Motor neuron (in vitro differentiated cells): ENCODE measurements at regions of chr14 and their contacts with region 1.

Region 1: DNA sequence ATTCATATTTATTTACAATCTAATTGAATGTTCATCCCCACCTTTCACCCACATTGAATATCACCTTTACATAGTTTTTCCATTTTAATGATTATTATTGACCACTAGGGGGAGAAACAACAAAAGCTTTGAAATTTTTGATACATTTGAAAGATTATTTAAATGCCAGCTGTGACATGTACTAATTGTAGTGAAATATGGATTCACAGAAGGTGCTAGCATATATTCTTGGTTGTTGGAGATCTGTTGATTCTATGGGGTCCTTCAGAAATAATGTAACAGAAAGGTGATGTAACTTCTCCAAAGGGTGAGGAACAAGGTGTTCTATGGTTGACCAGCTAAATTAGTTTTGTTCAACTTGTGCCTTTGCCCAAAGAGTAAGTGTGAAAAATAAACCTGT is 22.4 kb upstream of the GPR33 start:
- ATAC-seq: no peak
- H3K4me3 ChIP-seq: no peak overlapping the region
- H3K27ac ChIP-seq: no peak overlapping the region
- H3K4me1 ChIP-seq: no peaks in the 10 kb centered on the region

Region 2: GRCh38 chr14:31902002-31902401 is 391.8 kb after region 1 on chr14:
- in situ Hi-C with region 1: loop called in 1 of 9 experiments (anchors 25 kb)
- ATAC-seq: no peak
- H3K4me3 ChIP-seq: no peak overlapping the region
- H3K27ac ChIP-seq: no peak overlapping the region
- H3K4me1 ChIP-seq: no peaks in the 10 kb centered on the region

Region 3: DNA sequence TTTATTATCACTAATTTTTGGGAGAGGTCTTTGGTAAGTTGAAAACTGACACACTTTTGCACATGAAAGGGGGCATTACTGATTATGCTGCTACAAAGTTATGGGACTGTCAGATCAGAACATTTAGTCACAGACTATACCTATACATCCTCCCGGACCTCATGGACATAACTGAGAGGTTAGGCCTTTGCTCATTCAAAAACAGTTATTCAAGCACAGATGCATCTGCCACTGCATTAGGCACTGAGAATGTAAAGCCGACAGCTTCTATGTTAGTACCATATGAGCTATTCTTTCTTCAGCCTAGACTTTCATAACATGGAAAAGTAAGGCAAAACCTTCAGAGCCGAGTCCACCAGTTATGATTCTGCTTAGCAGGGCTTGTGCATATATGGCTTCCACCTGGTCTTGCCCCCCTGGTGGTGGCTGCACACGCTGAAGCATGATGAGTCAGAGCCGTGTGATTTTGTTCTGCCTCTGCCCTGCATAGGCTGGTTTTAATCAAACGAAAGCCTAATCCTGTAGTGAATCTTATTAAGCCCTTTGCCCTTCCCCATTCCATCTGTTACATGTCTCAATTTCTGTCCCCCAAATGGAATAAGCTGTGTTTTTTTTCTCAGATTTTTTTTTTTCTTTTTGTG is 714.6 kb after region 1 on chr14:
- in situ Hi-C with region 1: loop called in 1 of 9 experiments (anchors 25 kb)
- ATAC-seq: peak; percentile 99 to 100 (median 100)
- H3K4me3 ChIP-seq: no peak overlapping the region
- H3K27ac ChIP-seq: peak overlapping the region in 1 of 2 donors; percentile 39
- H3K4me1 ChIP-seq: peaks cover 9 to 11% of the 10 kb centered on the region in 2 donors